Mucosa of descending colon (tissue), 3 donors: ENCODE measurements at regions of chr1 and their contacts with region 1.

Region 1: DNA sequence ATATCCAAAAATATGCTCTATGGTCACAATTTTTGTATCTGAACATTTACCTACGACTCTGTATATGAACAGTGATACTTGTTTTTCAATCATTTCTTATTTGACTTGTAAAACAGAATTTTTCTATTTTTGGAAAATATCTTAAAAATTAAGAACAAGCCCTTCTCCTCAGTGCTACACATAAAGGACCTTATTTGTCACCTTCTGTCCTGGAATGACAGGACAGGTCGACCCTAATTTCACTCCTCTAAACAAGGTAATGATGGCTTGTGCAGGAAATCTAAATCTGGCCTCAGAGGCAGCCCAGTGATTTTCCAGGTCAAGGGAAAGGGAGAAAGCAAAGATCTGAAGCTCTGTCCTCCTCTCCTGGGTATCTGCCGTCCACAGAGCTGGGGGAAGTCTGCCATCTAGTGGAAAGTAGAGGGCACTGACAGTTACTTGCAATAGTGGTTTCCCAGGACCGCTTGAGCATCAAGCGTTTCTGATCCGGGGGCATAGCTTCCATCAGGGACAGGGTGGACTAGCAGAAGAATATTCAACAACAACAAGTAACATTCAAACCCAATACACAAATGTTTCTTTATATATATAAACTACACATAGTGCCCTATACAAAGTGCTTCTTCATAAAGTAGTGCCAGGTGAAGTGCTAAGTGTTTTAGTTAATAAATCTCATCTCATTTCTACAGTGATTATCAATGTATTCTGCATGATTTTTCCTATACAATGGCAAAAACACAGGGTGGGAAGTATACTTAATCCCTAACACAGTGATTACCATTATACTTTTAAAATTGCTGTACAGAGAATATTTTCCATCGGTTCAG is 74.6 kb downstream of the SLC25A24 start:
- DNase-seq: peak in 1 of 3 donors; percentile 54
- ATAC-seq: peak; percentile 93
- H3K4me3 ChIP-seq: no peak overlapping the region
- H3K4me1 ChIP-seq: no peaks in the 10 kb centered on the region
- CTCF ChIP-seq: peak; percentile 82

Region 2: DNA sequence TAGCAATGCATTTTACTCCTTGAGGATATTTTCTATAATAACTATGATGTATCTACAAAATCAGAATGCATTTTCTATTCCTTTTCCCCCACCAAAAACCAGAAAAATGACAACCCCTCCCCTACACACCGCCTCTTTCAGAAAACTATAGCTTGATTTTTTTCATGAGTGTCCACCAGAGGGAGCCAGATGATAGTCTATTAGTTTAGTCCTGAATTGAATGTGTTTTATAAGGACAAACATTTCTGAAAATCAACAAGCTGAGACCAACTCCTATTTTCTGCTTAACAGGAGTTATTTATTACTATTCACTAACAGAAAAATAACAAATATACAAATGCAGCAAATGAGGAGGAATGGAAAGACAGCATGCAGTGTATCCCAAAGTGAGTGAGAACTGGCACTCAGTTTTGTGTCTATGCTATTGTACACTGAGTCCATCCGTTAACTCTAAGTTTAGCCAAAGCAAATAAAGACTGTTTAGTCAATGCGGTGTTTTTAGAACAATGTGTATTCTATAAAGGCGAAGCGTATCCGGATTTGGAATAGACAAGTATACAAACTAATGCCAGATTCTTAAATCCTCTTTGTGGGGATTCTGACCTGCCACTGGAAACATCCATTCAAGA is 343.2 kb before region 1 on chr1:
- intact Hi-C with region 1: loop called (anchors 2 to 5 kb)
- DNase-seq: peak in 1 of 3 donors; percentile 76
- ATAC-seq: peak; percentile 56
- H3K4me3 ChIP-seq: no peak overlapping the region
- H3K4me1 ChIP-seq: no peaks in the 10 kb centered on the region
- CTCF ChIP-seq: no peak

Region 3: DNA sequence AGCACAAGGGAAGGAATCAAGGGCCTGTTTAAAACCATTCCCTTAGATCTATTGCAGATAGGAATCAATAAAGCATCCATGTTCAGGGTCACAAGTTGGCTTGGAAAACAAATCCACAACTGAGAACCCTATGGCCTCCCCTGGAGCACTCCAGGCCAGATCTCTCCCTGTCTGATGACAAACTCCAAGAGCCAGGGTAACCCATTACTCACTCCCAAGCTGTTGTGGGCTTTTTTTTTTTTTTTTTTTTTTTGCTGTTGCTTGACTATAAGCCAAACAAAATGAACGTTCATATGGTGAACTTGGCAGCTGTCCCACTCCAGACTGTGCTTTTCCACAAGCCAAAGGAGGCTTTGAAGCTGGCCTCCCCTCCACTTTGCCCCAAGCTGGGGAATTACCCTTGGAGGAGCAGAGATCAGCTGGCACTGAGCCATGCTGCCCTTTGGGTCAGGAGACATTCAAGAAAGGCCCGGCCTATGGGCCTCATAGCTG is 124.9 kb before region 1 on chr1:
- intact Hi-C with region 1: no loop called
- DNase-seq: peak in 2 of 3 donors; percentile 12 to 26
- ATAC-seq: no peak
- H3K4me3 ChIP-seq: no peak overlapping the region
- H3K4me1 ChIP-seq: peaks cover 3% of the 10 kb centered on the region
- CTCF ChIP-seq: no peak

Region 4: DNA sequence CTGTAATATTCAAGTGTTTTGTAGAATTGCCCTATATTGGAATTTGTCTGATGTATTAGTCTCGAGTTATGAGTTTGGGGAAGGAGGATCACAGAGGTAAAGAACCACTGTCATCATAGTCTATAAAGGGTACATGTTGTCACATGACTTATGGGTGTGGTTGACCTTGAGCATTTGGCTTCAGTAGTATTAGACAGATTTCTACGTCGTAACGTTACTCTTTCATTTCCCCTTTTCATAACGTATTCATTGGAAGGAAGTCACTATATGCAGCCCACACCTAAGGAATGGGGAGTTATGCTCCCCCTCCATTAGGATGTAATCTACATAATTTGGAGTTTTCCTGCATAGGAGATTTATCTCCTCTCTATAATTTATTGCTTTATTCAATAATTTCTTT is 50.5 kb before region 1 on chr1:
- intact Hi-C with region 1: no loop called
- DNase-seq: no peak
- ATAC-seq: peak; percentile 55
- H3K4me3 ChIP-seq: no peak overlapping the region
- H3K4me1 ChIP-seq: no peaks in the 10 kb centered on the region
- CTCF ChIP-seq: no peak